Activated B cell treated with CpG ODN at 0.5 μM for 24 hours (primary cell): ENCODE measurements at regions of chr13 and their contacts with region 1.

Region 1: DNA sequence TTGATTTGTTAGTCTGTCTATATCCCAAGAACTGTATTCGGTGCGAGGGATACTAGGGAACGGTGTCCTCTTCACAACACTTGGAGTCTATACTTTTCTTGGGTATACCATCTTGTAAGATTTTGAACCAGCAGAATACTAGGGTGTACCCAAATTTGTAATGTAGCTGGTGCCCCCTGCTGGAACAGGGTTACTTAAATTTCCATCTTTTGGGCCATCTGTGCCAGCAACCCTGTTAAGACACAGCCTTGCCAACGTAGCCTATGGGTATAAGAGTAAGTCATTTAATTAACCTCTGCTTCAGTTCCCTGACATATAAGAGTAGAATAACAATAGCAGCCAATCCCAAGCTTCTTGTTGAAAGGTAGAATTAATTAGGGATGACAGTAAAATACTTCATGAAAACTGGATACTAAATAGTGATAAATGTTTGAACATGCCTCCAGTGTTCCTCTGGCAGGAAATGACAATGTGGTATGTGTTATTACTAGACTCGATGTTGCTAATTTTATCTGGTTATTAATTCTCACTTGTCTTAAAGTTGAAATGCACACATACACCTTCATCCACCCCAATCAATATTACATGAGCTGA is 607.6 kb downstream of the FGF9 start:
- DNase-seq: no peak
- ATAC-seq: peak; percentile 54
- H3K4me3 Mint-ChIP-seq: no peak overlapping the region
- H3K27ac Mint-ChIP-seq: no peak overlapping the region
- H3K4me1 Mint-ChIP-seq: peaks cover 4% of the 10 kb centered on the region
- H3K27me3 Mint-ChIP-seq: no peaks in the 10 kb centered on the region
- CTCF ChIP-seq: no peak

Region 2: GRCh38 chr13:21670883-21671619 is 607.4 kb before region 1 on chr13 and contains the start of gene FGF9:
- CTCF ChIA-PET with region 1: no interaction called
- POLR2A ChIA-PET with region 1: no interaction called
- intact Hi-C with region 1: loop called (anchors 10 kb)
- DNase-seq: peak; percentile 76
- ATAC-seq: peak; percentile 77
- H3K4me3 Mint-ChIP-seq: peak within 1 kb of the TSS; percentile 85
- H3K27ac Mint-ChIP-seq: peak within 1 kb of the TSS; percentile 61
- H3K4me1 Mint-ChIP-seq: peaks cover 48% of the 10 kb centered on the region
- H3K27me3 Mint-ChIP-seq: peaks cover 43% of the 10 kb centered on the region
- CTCF ChIP-seq: no peak
- total RNA-seq, gene FGF9: 0.22 and 0.49 TPM in 2 replicates

Region 3: DNA sequence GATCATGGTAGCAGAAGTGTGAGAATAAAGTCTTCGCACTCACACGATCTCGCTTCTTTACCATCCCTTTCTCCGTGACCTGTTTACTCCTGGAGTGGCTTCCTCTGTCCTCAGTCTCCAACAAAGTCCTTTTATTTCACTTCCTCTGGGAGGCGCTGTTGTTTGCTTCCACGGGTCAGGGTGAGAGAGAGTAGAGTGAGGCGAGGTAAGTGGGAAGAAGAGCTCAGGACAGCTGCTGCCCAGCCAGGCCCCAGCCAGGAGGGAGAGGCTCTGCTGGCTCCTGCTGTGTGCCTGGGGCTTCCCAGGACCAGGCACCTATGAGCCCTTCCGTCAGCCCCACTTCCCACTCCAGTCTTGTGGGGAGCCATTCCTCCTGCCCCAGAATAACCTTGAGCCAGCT is 365.4 kb before region 1 on chr13:
- CTCF ChIA-PET with region 1: no interaction called
- POLR2A ChIA-PET with region 1: no interaction called
- intact Hi-C with region 1: loop called (anchors 5 kb)
- DNase-seq: no peak
- ATAC-seq: no peak
- H3K4me3 Mint-ChIP-seq: no peak overlapping the region
- H3K27ac Mint-ChIP-seq: no peak overlapping the region
- H3K4me1 Mint-ChIP-seq: no peaks in the 10 kb centered on the region
- H3K27me3 Mint-ChIP-seq: no peaks in the 10 kb centered on the region
- CTCF ChIP-seq: no peak

Region 4: GRCh38 chr13:21925718-21926117 is 352.7 kb before region 1 on chr13:
- CTCF ChIA-PET with region 1: interaction called, 3 read pairs
- POLR2A ChIA-PET with region 1: no interaction called
- intact Hi-C with region 1: loop called (anchors 2 kb)
- DNase-seq: no peak
- ATAC-seq: no peak
- H3K4me3 Mint-ChIP-seq: no peak overlapping the region
- H3K27ac Mint-ChIP-seq: no peak overlapping the region
- H3K4me1 Mint-ChIP-seq: no peaks in the 10 kb centered on the region
- H3K27me3 Mint-ChIP-seq: no peaks in the 10 kb centered on the region
- CTCF ChIP-seq: no peak

Region 5: DNA sequence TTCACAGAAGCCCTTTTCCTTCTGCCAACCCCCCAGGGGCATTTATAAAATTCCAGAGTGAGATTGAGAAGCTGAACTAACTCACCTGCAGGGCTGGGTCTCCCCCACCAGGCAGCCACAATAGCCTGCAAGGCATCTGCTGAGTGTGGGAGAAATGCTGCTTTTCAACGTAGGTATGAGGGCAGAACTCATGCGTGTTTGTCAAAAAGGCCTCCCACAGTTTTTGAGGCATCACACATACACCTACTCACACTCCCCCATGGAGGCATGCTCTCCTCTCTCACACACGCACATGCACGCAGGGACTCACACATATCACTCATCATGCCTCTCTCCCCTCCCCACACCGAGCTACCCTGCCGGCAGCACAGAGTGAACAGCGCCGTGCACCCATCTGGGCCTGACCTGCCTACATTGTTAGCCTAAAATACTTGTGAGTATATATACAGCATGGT is 217.1 kb before region 1 on chr13:
- CTCF ChIA-PET with region 1: interaction called, 5 read pairs
- POLR2A ChIA-PET with region 1: no interaction called
- intact Hi-C with region 1: loop called (anchors 5 kb)
- DNase-seq: peak; percentile 17
- ATAC-seq: peak; percentile 65
- H3K4me3 Mint-ChIP-seq: peak overlapping the region; percentile 51
- H3K27ac Mint-ChIP-seq: peak overlapping the region; percentile 86
- H3K4me1 Mint-ChIP-seq: peaks cover 46% of the 10 kb centered on the region
- H3K27me3 Mint-ChIP-seq: no peaks in the 10 kb centered on the region
- CTCF ChIP-seq: no peak